Activated CD4-positive, alpha-beta T cell treated with anti-CD3 and anti-CD28 coated beads for 36 hours (primary cell): ENCODE measurements at regions of chr20 and their contacts with region 1.

Region 1: GRCh38 chr20:55333798-55334197 is 671.5 kb downstream of the CBLN4 start:
- DNase-seq: no peak
- ATAC-seq: no peak
- H3K4me3 Mint-ChIP-seq: no peak overlapping the region
- H3K27ac Mint-ChIP-seq: no peak overlapping the region
- H3K4me1 Mint-ChIP-seq: no peaks in the 10 kb centered on the region
- H3K27me3 Mint-ChIP-seq: no peaks in the 10 kb centered on the region

Region 2: DNA sequence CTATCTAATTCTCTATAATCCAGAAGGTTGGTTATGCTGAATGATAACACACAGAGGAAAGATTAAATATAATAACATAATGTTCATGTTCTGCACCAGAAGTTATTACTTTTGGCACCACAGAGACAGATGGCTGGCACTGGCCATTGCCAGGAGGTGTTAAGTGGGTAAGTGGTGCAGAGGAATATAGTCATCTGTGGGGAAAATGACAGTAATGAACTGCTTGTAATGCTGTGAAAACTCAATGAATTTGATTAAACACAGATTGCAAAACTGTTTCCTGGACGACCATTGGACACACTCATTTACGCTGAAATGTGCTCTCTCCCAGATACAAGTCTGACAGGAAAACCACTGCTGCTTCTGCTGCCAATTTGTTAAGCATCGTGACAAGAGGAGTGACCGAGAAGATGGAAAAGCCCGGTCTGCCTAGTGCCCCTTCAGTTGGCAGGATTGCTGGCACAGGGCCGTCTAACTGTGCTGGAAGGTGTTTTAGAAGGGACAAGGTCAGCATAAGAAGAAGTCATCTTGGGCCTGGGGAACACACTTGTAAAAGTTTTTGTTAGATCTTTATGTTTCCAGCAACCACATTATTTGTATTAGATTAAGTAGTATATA is 104.1 kb after region 1 on chr20:
- CTCF ChIA-PET with region 1: no interaction called
- POLR2A ChIA-PET with region 1: no interaction called
- intact Hi-C with region 1: no loop called
- DNase-seq: no peak
- ATAC-seq: no peak
- H3K4me3 Mint-ChIP-seq: no peak overlapping the region
- H3K27ac Mint-ChIP-seq: no peak overlapping the region
- H3K4me1 Mint-ChIP-seq: no peaks in the 10 kb centered on the region
- H3K27me3 Mint-ChIP-seq: no peaks in the 10 kb centered on the region

Region 3: DNA sequence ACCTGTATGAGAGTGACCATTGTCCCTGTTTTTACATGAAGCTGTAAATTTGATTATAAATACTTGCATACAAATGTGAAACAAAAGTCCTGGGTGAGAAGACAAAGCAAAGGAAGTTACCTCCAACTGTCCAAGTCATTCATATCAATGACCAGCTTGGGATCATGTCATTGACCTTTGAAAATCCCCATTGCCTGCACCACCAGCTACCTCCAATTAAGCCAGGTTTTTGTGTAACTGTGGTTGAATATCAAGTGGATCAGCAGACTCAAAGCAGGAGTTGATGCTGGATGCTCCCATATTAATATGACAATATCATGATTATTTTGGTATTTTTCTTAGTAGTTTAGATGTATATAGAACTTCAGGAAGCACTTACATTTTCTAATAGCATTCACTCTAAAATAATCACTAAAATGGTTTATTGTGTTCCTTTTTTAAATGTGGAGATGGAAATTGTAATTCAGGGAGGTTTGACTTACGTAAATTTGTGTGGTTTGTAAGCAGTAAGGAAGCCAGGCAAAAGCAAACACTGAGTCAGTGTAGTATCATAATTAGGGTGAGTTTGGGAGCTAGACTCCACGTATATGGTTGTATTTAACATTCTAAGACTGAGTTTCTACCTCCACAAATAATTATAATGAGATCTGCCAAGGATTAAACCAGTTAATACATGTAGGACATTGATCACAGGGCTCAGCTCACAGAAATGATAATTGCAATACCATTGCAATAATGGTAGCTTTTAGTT is 245.8 kb after region 1 on chr20:
- CTCF ChIA-PET with region 1: no interaction called
- POLR2A ChIA-PET with region 1: no interaction called
- intact Hi-C with region 1: loop called in 1 of 2 experiments (anchors 10 kb)
- DNase-seq: no peak
- ATAC-seq: no peak
- H3K4me3 Mint-ChIP-seq: no peak overlapping the region
- H3K27ac Mint-ChIP-seq: no peak overlapping the region
- H3K4me1 Mint-ChIP-seq: no peaks in the 10 kb centered on the region
- H3K27me3 Mint-ChIP-seq: no peaks in the 10 kb centered on the region